ENCODE measurements at regions of chr2 and their contacts with region 1.

Region 1: GRCh38 chr2:63861220-63861822 is 19.6 kb downstream of the UGP2 start:
- DNase-seq: peak; percentile 29 to 83 (median 66)
- ATAC-seq: peak; percentile 61
- H3K4me3 ChIP-seq: no peak overlapping the region
- H3K4me3 Mint-ChIP-seq: no peak overlapping the region
- H3K27ac ChIP-seq: no peak overlapping the region
- H3K27ac Mint-ChIP-seq: peak overlapping the region; percentile 12
- H3K4me1 ChIP-seq: peaks cover 21% of the 10 kb centered on the region
- H3K4me1 Mint-ChIP-seq: peaks cover 32% of the 10 kb centered on the region
- H3K27me3 ChIP-seq: no peaks in the 10 kb centered on the region
- H3K27me3 Mint-ChIP-seq: no peaks in the 10 kb centered on the region
- CTCF ChIP-seq: peak; percentile 71

Region 2: DNA sequence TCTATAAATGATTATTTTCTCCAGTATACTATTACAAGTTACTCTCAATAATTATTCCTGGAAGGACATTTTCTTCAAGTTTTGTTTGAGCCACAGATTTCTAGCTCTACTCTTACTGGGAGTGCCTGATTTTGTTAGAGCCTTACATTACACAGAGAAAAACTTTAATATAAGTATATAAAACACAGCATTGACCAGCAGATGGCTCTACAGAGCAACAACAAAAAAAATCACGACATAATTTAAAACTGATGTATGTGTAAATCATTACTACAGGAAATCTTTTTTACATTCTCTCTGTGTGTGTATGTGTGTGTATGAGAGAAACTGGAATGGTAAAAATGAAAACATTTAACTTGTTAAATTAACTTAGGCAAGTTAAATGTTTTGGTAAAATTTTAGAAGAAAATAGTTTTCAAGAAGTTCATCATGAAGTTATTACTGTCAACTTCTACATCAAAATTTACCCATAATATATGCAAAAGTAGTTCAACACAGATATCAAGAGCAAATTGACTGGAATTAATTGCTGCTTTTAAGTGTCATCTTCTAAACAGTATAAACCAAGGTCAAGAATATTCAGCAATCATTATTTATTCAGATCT is 169.2 kb before region 1 on chr2:
- CTCF ChIA-PET with region 1: interaction called, 73 read pairs
- POLR2A ChIA-PET with region 1: interaction called, 3 read pairs
- intact Hi-C with region 1: loop called (anchors 1 kb)
- DNase-seq: peak in 4 of 9 experiments; percentile 5 to 68 (median 33)
- ATAC-seq: peak; percentile 68
- H3K4me3 ChIP-seq: no peak overlapping the region
- H3K4me3 Mint-ChIP-seq: no peak overlapping the region
- H3K27ac ChIP-seq: no peak overlapping the region
- H3K27ac Mint-ChIP-seq: no peak overlapping the region
- H3K4me1 ChIP-seq: no peaks in the 10 kb centered on the region
- H3K4me1 Mint-ChIP-seq: no peaks in the 10 kb centered on the region
- H3K27me3 ChIP-seq: no peaks in the 10 kb centered on the region
- H3K27me3 Mint-ChIP-seq: no peaks in the 10 kb centered on the region
- CTCF ChIP-seq: peak; percentile 82

Region 3: DNA sequence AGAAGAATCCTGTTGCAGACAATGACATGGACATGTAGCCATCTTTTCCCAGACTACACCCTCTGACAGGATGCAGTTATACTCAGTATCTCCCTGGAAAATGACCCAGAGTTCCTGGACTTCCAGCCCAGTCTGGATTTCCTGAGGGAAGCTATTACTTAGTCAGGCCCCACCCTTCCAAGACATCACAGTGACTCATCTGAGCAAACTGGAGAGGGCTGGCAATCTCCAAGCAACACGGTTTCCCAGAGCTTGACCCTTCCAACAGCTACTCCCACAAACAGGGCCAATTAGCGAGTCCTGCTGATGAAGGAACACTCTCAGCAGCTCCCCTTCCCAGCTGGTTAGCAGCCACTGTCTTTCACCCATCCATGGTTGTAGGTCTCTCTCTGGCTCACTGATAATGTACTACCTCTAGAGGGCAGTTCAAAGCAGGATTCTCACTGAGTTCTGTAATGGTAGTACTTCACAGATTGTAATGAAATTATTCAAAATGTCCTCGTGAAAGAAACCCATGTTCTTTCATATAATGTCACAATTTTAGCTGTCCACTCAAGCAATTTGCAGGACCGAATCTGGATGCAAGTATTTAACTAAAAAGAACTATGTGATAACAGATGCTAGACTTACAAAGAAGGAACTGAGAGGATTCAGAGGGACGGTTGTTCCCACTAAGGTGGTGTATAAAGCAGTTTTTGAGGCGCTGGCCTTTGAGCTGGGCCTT is 162.3 kb before region 1 on chr2:
- CTCF ChIA-PET with region 1: interaction called, 73 read pairs
- POLR2A ChIA-PET with region 1: no interaction called
- intact Hi-C with region 1: no loop called
- DNase-seq: peak in 3 of 9 experiments; percentile 12 to 52 (median 39)
- ATAC-seq: peak; percentile 69
- H3K4me3 ChIP-seq: no peak overlapping the region
- H3K4me3 Mint-ChIP-seq: no peak overlapping the region
- H3K27ac ChIP-seq: no peak overlapping the region
- H3K27ac Mint-ChIP-seq: no peak overlapping the region
- H3K4me1 ChIP-seq: no peaks in the 10 kb centered on the region
- H3K4me1 Mint-ChIP-seq: no peaks in the 10 kb centered on the region
- H3K27me3 ChIP-seq: no peaks in the 10 kb centered on the region
- H3K27me3 Mint-ChIP-seq: no peaks in the 10 kb centered on the region
- CTCF ChIP-seq: peak; percentile 34

Region 4: GRCh38 chr2:63827749-63828148 is 33.6 kb before region 1 on chr2:
- CTCF ChIA-PET with region 1: interaction called, 3 read pairs
- POLR2A ChIA-PET with region 1: no interaction called
- intact Hi-C with region 1: loop called in 1 of 2 experiments (anchors 5 kb)
- DNase-seq: no peak
- ATAC-seq: no peak
- H3K4me3 ChIP-seq: no peak overlapping the region
- H3K4me3 Mint-ChIP-seq: no peak overlapping the region
- H3K27ac ChIP-seq: no peak overlapping the region
- H3K27ac Mint-ChIP-seq: no peak overlapping the region
- H3K4me1 ChIP-seq: no peaks in the 10 kb centered on the region
- H3K4me1 Mint-ChIP-seq: no peaks in the 10 kb centered on the region
- H3K27me3 ChIP-seq: peaks cover 0 to 2% of the 10 kb centered on the region in 2 experiments
- H3K27me3 Mint-ChIP-seq: peaks cover 5% of the 10 kb centered on the region
- CTCF ChIP-seq: no peak

Region 5: DNA sequence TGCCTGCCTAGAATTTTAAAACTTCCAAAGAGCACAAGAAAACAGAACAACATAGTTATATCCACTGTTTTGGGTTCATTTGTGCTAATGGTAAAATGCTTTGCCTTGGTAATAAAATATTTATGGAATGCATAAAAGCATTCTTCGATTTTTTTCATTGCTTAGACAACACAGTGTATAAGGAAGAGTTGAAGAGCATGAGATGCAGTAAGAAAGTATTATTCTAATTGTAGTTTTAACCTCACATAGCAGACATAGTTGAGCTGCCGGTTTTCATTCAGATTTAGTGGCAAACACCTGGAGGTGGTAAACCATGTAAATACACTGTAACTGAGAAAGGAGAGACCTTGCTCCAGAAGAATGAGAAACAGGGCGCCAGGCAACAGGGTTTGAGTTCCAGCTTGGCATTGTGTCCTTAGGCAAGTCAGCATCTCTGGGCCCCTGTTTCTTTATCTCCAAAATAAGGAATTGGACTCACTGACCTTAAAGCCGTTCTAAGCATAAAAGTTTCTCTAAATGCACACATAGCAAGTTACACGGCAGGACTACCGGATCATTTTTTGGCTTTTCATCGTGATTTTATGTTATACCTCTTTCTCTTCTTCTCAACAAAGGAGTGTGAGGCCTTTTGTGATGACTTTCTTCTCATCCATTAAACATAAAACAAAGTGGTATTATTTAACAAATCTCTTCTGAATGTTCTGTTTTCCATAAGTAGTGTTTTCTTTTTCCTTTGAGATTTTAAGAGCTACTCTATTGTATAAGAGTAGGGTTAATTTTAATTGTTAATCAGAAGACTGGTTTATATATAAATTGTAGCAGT is 11.7 kb before region 1 on chr2:
- CTCF ChIA-PET with region 1: interaction called, 29 read pairs
- POLR2A ChIA-PET with region 1: interaction called, 6 read pairs
- intact Hi-C with region 1: no loop called
- DNase-seq: no peak
- ATAC-seq: no peak
- H3K4me3 ChIP-seq: no peak overlapping the region
- H3K4me3 Mint-ChIP-seq: no peak overlapping the region
- H3K27ac ChIP-seq: no peak overlapping the region
- H3K27ac Mint-ChIP-seq: peak overlapping the region; percentile 63
- H3K4me1 ChIP-seq: peaks cover 61% of the 10 kb centered on the region
- H3K4me1 Mint-ChIP-seq: peaks cover 92% of the 10 kb centered on the region
- H3K27me3 ChIP-seq: no peaks in the 10 kb centered on the region
- H3K27me3 Mint-ChIP-seq: no peaks in the 10 kb centered on the region
- CTCF ChIP-seq: no peak

Region 6: DNA sequence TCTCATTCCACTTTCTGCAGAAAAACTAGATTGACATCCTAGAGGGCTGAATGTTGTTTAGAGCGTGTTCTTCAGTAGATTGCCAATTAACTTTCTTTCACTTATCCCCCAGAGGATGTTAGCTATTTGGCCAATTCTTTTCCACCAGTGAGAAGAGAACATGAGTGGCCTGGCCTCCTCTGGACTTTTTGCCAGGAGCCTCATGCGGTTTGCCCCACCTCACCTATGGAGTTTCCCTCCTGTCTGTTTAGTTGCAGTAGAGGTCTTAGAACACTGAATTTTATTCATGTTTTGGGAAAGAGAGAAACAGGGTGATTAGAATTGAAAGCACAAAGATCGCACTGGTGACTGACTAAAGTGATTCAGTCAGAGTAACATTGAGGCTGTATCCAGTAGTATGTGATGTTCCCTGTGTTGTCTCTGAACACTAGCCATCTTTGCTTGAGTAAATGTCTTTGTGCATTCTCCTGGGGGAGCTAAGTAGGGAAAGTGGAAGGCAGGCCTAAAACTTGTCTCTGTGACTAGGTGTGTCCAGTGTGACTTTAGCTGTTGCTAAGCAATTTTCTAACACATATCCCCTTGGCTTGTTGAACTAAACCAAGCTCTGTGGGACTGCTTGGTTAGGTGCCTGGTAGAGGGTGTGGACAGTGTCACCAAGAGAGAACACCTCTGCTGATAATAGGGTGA is 14.4 kb after region 1 on chr2:
- CTCF ChIA-PET with region 1: interaction called, 10 read pairs
- POLR2A ChIA-PET with region 1: interaction called, 4 read pairs
- intact Hi-C with region 1: no loop called
- DNase-seq: no peak
- ATAC-seq: no peak
- H3K4me3 ChIP-seq: no peak overlapping the region
- H3K4me3 Mint-ChIP-seq: no peak overlapping the region
- H3K27ac ChIP-seq: no peak overlapping the region
- H3K27ac Mint-ChIP-seq: peak overlapping the region; percentile 70
- H3K4me1 ChIP-seq: peaks cover 4% of the 10 kb centered on the region
- H3K4me1 Mint-ChIP-seq: peaks cover 35% of the 10 kb centered on the region
- H3K27me3 ChIP-seq: no peaks in the 10 kb centered on the region
- H3K27me3 Mint-ChIP-seq: no peaks in the 10 kb centered on the region
- CTCF ChIP-seq: no peak